Stomach (tissue), 19 donors: ENCODE measurements at regions of chr4 and their contacts with region 1.

Region 1: DNA sequence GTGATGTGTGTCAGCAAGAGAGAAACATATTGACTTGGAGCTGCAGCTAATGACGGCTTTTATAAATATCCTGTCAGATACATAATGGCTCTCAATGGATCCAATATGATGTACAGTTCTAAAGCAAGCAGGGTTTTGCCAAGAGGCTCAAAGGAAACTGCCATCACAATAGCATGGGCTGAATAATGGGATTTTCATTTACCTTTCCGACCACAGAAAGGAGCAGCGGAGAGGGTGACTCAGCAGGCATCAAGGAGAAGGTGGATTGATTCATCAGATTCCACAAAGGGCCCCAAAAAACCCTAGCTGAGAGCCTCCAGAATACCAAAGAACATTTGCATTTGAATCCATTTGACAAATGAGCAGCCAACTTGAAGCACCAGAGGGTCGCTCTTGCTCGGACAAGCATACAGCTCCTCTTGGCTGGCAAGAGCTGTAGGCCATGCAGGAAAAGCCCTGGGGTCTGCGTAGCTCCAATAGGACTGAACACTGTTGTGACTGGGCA is 355.7 kb upstream of the NOCT start:
- DNase-seq: no peak
- H3K4me3 ChIP-seq: no peak overlapping the region
- H3K27ac ChIP-seq: no peak overlapping the region
- H3K4me1 ChIP-seq: no peaks in the 10 kb centered on the region
- H3K27me3 ChIP-seq: no peaks in the 10 kb centered on the region
- CTCF ChIP-seq: no peak
- EP300 ChIP-seq: no peak
- POLR2A ChIP-seq: no peak

Region 2: GRCh38 chr4:138222046-138222445 is 437.8 kb before region 1 on chr4:
- intact Hi-C with region 1: loop called (anchors 5 kb)
- DNase-seq: peak in 1 of 2 donors; percentile 41
- H3K4me3 ChIP-seq: no peak overlapping the region
- H3K27ac ChIP-seq: no peak overlapping the region
- H3K4me1 ChIP-seq: peaks cover 0 to 8% (median 4%) of the 10 kb centered on the region in 4 donors
- H3K27me3 ChIP-seq: no peaks in the 10 kb centered on the region
- CTCF ChIP-seq: no peak
- EP300 ChIP-seq: no peak
- POLR2A ChIP-seq: no peak

Region 3: GRCh38 chr4:138562544-138562991 is 97.3 kb before region 1 on chr4:
- intact Hi-C with region 1: no loop called
- DNase-seq: peak in 1 of 2 donors; percentile 37
- H3K4me3 ChIP-seq: no peak overlapping the region
- H3K27ac ChIP-seq: peak overlapping the region in 1 of 5 donors; percentile 5
- H3K4me1 ChIP-seq: no peaks in the 10 kb centered on the region
- H3K27me3 ChIP-seq: no peaks in the 10 kb centered on the region
- CTCF ChIP-seq: no peak
- EP300 ChIP-seq: no peak
- POLR2A ChIP-seq: no peak